H1 (cell line): ENCODE measurements at regions of chr6 and their contacts with region 1.

Region 1: GRCh38 chr6:126361832-126362412 is 22.0 kb downstream of the CENPW start:
- DNase-seq: no peak
- H3K4me3 ChIP-seq: no peak overlapping the region
- H3K27ac ChIP-seq: no peak overlapping the region
- H3K4me1 ChIP-seq: no peaks in the 10 kb centered on the region; a peak in 1 of 7 replicates
- H3K27me3 ChIP-seq: no peaks in the 10 kb centered on the region
- CTCF ChIP-seq: no peak
- EP300 ChIP-seq: no peak
- POLR2A ChIP-seq: no peak
- RAD21 ChIP-seq: no peak

Region 2: DNA sequence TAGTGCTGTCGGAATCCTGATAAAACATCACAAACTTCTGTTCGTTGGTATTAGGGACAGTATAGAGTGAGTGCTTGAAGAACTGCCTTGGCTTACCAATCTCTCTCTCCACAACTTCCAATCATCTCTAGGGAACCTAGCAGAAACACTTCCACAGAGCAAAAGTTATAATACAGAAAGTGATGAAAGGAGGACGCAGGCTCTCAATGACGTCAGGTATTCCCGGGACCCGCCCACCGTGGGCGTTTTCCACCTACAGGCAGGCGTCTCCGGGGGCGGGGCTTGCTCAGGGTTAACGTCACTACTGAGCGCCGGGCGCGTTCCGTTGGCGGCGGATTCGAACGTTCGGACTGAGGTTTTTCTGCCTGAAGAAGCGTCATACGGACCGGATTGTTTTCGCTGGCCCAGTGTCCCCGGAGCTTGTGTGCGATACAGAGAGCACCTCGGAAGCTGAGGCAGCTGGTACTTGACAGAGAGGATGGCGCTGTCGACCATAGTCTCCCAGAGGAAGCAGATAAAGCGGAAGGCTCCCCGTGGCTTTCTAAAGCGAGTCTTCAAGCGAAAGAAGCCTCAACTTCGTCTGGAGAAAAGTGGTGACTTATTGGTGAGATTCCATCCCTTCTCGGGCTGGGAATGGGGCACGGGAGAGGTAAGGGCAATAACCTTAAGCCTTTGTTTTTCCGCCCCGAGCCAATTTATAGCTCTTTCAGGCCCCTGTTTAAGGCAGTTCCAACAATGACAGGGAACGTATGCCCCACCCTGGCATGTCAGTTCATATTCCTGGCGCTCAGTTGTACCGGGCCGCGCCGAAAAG is 21.9 kb before region 1 on chr6 and contains the start of gene CENPW:
- CTCF ChIA-PET with region 1: interaction called, 16 read pairs
- POLR2A ChIA-PET with region 1: interaction called, 3 read pairs
- DNase-seq: peak; percentile 79 to 99
- H3K4me3 ChIP-seq: peak within 1 kb of the TSS; percentile 89 to 95 (median 90)
- H3K27ac ChIP-seq: peak within 1 kb of the TSS; percentile 67
- H3K4me1 ChIP-seq: peaks cover 0 to 5% (median 1%) of the 10 kb centered on the region in 4 experiments; a peak in 2 of 7 replicates
- H3K27me3 ChIP-seq: no peaks in the 10 kb centered on the region
- CTCF ChIP-seq: no peak
- EP300 ChIP-seq: peak in 1 of 2 experiments; percentile 37; a peak in 1 of 3 replicates
- POLR2A ChIP-seq: peak; percentile 88 to 91
- RAD21 ChIP-seq: 0 out of 4 replicates have a peak, but pooled peaks of 1 of the 2 experiments have one; percentile 2
- total RNA-seq, gene CENPW: 91.1 and 104 TPM in 2 replicates

Region 3: GRCh38 chr6:126372626-126373025 is 10.7 kb after region 1 on chr6:
- CTCF ChIA-PET with region 1: interaction called, 29 read pairs
- POLR2A ChIA-PET with region 1: interaction called, 3 read pairs
- DNase-seq: no peak
- H3K4me3 ChIP-seq: no peak overlapping the region
- H3K27ac ChIP-seq: no peak overlapping the region
- H3K4me1 ChIP-seq: no peaks in the 10 kb centered on the region
- H3K27me3 ChIP-seq: peaks cover 0 to 1% (median 0%) of the 10 kb centered on the region in 4 experiments; a peak in 1 of 7 replicates
- CTCF ChIP-seq: no peak
- EP300 ChIP-seq: no peak
- POLR2A ChIP-seq: no peak
- RAD21 ChIP-seq: no peak

Region 4: GRCh38 chr6:126657561-126658175 is 295.7 kb after region 1 on chr6:
- CTCF ChIA-PET with region 1: interaction called, 25 read pairs
- POLR2A ChIA-PET with region 1: no interaction called
- DNase-seq: no peak
- H3K4me3 ChIP-seq: no peak overlapping the region
- H3K27ac ChIP-seq: no peak overlapping the region
- H3K4me1 ChIP-seq: no peaks in the 10 kb centered on the region
- H3K27me3 ChIP-seq: no peaks in the 10 kb centered on the region
- CTCF ChIP-seq: peak in 2 of 3 experiments; percentile 41 to 60; a peak in 2 of 4 replicates
- EP300 ChIP-seq: no peak
- POLR2A ChIP-seq: no peak
- RAD21 ChIP-seq: peak; percentile 81 to 82

Region 5: DNA sequence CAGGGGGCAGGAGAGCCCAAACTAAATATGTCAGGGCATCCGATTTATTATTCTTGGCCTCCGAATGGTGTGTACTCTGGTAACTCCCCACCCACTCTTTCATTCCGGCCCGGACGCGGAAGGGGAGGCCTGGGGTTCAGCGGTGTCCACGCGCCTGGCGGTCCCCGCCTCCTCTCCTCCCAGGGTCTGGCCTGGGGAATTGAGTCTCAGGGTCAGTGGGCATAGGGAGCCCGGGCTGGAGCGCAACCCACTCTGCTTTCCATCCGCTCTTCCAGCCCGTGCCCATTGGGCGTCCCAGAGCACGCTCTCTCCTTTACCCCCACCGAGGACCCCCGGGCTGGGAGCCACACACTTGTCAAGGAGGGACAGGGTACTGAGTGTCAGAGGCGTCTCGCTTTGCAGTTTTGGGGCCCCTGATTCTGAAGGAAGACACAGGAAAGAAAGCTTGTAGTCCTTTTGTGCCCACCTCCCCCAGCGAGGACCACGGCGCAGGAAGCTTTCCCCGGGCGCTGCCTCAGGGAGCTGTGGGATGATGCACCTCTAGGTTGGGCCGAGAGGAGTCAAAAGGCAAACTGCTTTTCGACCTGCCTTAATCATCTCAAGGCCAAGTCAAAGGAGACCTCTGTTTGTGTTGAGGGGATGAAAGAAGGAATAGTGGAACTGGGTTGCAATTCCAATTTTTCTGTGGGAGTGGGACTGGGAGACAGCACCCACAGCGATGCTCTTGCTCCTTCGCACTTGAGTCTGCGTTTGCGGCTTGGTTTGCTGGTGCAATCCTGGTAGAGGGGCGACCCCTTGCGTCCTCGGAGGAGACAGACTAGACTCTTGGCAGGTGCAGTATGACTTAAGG is 759.1 kb after region 1 on chr6:
- CTCF ChIA-PET with region 1: interaction called, 10 read pairs
- POLR2A ChIA-PET with region 1: no interaction called
- DNase-seq: peak in 1 of 2 experiments; percentile 89
- H3K4me3 ChIP-seq: peak overlapping the region; percentile 61 to 77 (median 70); a peak in 7 of 8 replicates
- H3K27ac ChIP-seq: no peak overlapping the region
- H3K4me1 ChIP-seq: peaks cover 0 to 16% (median 12%) of the 10 kb centered on the region in 4 experiments; a peak in 6 of 7 replicates
- H3K27me3 ChIP-seq: peaks cover 29 to 49% (median 42%) of the 10 kb centered on the region in 4 experiments
- CTCF ChIP-seq: peak; percentile 88 to 98 (median 91)
- EP300 ChIP-seq: no peak
- POLR2A ChIP-seq: no peak
- RAD21 ChIP-seq: peak; percentile 99 to 100